HEK293T (cell line): ENCODE measurements at regions of chrX and their contacts with region 1.

Region 1: GRCh38 chrX:19804151-19804550 is 83.2 kb downstream of the SH3KBP1 start:
- DNase-seq: no peak

Region 2: DNA sequence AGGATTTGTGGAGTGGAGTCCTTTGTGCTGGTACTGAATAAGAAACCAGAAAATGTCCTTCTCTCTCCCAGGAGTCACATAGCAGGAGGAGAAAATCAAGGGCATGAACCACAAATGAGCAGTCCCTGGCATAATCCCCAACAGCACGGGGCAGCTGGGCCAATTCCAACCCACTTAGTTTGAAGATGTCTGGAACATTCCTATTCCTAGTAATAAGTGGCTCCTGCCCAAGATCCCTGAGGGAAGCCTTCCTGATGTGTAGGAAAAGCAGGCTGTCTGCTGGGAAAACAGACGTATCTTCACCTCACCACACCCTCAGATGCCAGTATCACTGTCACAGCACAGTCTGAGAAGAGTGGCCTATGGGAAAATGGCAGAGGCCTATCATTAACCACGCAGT is 106.0 kb before region 1 on chrX:
- CTCF ChIA-PET with region 1: interaction called, 10 read pairs
- POLR2A ChIA-PET with region 1: no interaction called
- DNase-seq: no peak